Activated B cell treated with CpG ODN at 0.5 μM for 24 hours (primary cell): ENCODE measurements at regions of chr19 and their contacts with region 1.

Region 1: GRCh38 chr19:14136509-14137281 is at the start of gene ASF1B:
- DNase-seq: peak; percentile 94
- ATAC-seq: peak; percentile 80
- H3K4me3 Mint-ChIP-seq: peak within 1 kb of the TSS; percentile 94
- H3K27ac Mint-ChIP-seq: peak within 1 kb of the TSS; percentile 94
- H3K4me1 Mint-ChIP-seq: peaks cover 16% of the 10 kb centered on the region
- H3K27me3 Mint-ChIP-seq: no peaks in the 10 kb centered on the region
- CTCF ChIP-seq: no peak
- total RNA-seq, gene ASF1B: 3.4 and 3.7 TPM in 2 replicates

Region 2: GRCh38 chr19:13794757-13795589 is 341.7 kb before region 1 on chr19 and contains the start of gene ZSWIM4:
- CTCF ChIA-PET with region 1: no interaction called
- POLR2A ChIA-PET with region 1: no interaction called
- intact Hi-C with region 1: loop called (anchors 5 kb)
- DNase-seq: peak; percentile 86
- ATAC-seq: peak; percentile 95
- H3K4me3 Mint-ChIP-seq: peak within 1 kb of the TSS; percentile 98
- H3K27ac Mint-ChIP-seq: peak within 1 kb of the TSS; percentile 91
- H3K4me1 Mint-ChIP-seq: peaks cover 32% of the 10 kb centered on the region
- H3K27me3 Mint-ChIP-seq: no peaks in the 10 kb centered on the region
- CTCF ChIP-seq: no peak
- total RNA-seq, gene ZSWIM4: 8.5 and 11.2 TPM in 2 replicates

Region 3: DNA sequence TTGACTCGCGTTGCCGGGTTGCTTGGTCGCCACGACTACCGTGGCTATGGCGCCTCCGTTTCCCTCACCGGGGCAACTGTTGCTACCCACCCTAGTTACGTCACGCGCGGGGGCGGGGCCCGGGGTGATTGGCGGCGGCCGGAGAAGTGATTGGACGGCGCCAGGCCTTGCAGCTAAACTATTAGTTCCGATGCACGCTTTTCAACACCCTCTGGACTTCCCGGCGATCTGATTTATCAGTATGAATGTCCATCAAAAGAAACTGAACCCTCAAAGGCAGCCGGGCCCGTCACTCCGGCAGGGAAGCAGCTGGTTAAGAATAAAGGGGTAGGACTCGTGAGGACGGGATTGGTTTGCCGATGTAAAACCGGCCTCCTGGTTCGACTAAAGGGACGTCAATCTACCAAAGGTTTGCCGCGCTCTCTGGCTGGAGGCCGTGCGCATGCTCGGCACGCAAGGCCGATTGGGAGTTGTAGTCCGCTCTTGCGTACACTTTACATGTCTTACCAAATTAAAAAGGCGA is 130.4 kb before region 1 on chr19 and contains the start of gene RFX1:
- CTCF ChIA-PET with region 1: no interaction called
- POLR2A ChIA-PET with region 1: interaction called, 5 read pairs
- intact Hi-C with region 1: loop called (anchors 2 kb)
- DNase-seq: peak; percentile 100
- ATAC-seq: peak; percentile 74
- H3K4me3 Mint-ChIP-seq: peak within 1 kb of the TSS; percentile 94
- H3K27ac Mint-ChIP-seq: peak within 1 kb of the TSS; percentile 98
- H3K4me1 Mint-ChIP-seq: peaks cover 48% of the 10 kb centered on the region
- H3K27me3 Mint-ChIP-seq: no peaks in the 10 kb centered on the region
- CTCF ChIP-seq: no peak
- total RNA-seq, gene RFX1: 19.0 and 19.9 TPM in 2 replicates

Region 4: GRCh38 chr19:14091081-14091812 is 45.4 kb before region 1 on chr19:
- CTCF ChIA-PET with region 1: no interaction called
- POLR2A ChIA-PET with region 1: interaction called, 11 read pairs
- intact Hi-C with region 1: loop called (anchors 1 kb)
- DNase-seq: peak; percentile 81
- ATAC-seq: peak; percentile 75
- H3K4me3 Mint-ChIP-seq: peak overlapping the region; percentile 99
- H3K27ac Mint-ChIP-seq: peak overlapping the region; percentile 99
- H3K4me1 Mint-ChIP-seq: peaks cover 18% of the 10 kb centered on the region
- H3K27me3 Mint-ChIP-seq: no peaks in the 10 kb centered on the region
- CTCF ChIP-seq: no peak

Region 5: GRCh38 chr19:14198384-14199376 is 62.0 kb after region 1 on chr19:
- CTCF ChIA-PET with region 1: interaction called, 3 read pairs
- POLR2A ChIA-PET with region 1: no interaction called
- intact Hi-C with region 1: loop called (anchors 2 kb)
- DNase-seq: no peak
- ATAC-seq: no peak
- H3K4me3 Mint-ChIP-seq: no peak overlapping the region
- H3K27ac Mint-ChIP-seq: no peak overlapping the region
- H3K4me1 Mint-ChIP-seq: peaks cover 10% of the 10 kb centered on the region
- H3K27me3 Mint-ChIP-seq: peaks cover 5% of the 10 kb centered on the region
- CTCF ChIP-seq: no peak

Region 6: GRCh38 chr19:14248578-14249011 is 111.9 kb after region 1 on chr19:
- CTCF ChIA-PET with region 1: no interaction called
- POLR2A ChIA-PET with region 1: no interaction called
- intact Hi-C with region 1: no loop called
- DNase-seq: peak; percentile 32
- ATAC-seq: peak; percentile 67
- H3K4me3 Mint-ChIP-seq: peak overlapping the region; percentile 69
- H3K27ac Mint-ChIP-seq: peak overlapping the region; percentile 35
- H3K4me1 Mint-ChIP-seq: peaks cover 23% of the 10 kb centered on the region
- H3K27me3 Mint-ChIP-seq: peaks cover 3% of the 10 kb centered on the region
- CTCF ChIP-seq: no peak

Region 7: DNA sequence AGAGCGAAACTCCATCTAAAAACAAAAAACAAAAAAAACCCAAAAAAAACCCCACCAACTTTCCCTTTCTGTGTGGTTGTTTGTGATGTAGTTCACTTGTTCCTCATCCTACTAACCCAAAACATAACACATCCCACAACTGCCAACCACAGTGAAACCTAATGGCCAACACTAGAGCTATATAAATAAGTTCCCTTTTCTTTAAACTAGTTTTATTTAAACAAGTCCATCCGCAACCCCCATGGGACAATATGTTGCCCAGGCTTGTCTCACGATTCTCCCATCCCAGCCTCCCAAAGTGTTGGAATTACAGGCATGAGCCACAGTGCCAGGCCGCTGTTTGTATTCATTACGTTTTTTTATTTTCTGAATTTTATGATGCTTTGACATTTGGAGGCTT is 173.4 kb after region 1 on chr19:
- CTCF ChIA-PET with region 1: no interaction called
- POLR2A ChIA-PET with region 1: no interaction called
- intact Hi-C with region 1: no loop called
- DNase-seq: no peak
- ATAC-seq: peak; percentile 76
- H3K4me3 Mint-ChIP-seq: no peak overlapping the region
- H3K27ac Mint-ChIP-seq: peak overlapping the region; percentile 4
- H3K4me1 Mint-ChIP-seq: peaks cover 17% of the 10 kb centered on the region
- H3K27me3 Mint-ChIP-seq: no peaks in the 10 kb centered on the region
- CTCF ChIP-seq: no peak

Region 8: GRCh38 chr19:14419106-14419813 is 282.6 kb after region 1 on chr19 and contains the start of gene DDX39A:
- CTCF ChIA-PET with region 1: no interaction called
- POLR2A ChIA-PET with region 1: no interaction called
- intact Hi-C with region 1: loop called (anchors 1 kb)
- DNase-seq: peak; percentile 83
- ATAC-seq: peak; percentile 91
- H3K4me3 Mint-ChIP-seq: peak within 1 kb of the TSS; percentile 99
- H3K27ac Mint-ChIP-seq: peak within 1 kb of the TSS; percentile 99
- H3K4me1 Mint-ChIP-seq: peaks cover 44% of the 10 kb centered on the region
- H3K27me3 Mint-ChIP-seq: no peaks in the 10 kb centered on the region
- CTCF ChIP-seq: no peak
- total RNA-seq, gene DDX39A: 210 and 211 TPM in 2 replicates

Region 9: DNA sequence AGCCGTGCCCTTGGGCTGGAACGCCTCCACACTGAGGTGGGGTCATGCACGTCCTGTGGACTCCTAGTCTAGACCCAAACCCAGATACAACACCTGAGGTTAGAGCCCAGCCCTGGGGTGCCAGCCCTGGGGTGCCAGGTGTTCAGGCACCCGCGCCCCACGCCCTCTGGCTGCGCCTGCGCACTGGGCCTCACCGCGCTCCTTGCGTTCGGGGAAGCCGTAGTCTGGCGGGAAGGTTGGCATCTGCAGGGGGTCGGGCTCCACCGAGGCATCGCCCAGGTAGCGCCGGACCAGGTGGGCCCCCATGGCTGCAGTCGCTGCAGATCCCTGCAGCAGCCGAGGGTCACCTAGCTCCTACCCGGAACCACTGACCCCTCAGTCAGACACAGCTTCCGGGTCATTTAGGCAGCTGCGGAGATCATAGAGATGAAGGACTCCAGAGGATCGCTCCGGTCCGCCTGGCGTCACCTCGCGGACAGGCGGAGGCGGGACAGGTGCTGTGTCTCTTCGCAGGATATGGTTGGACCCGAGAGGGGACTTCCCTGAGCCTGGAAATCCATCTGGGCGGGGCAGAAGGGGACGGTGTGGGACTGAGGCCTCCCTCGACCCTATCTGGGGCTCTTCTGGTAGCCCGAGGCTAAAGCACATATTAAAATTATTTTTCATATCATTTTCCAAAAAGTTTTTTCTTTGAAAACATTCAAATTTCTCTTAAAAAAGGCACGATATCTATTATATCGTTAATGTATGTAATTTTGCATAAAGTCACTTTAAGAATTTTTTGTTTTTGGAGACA is 435.2 kb after region 1 on chr19 and contains the start of gene NDUFB7:
- CTCF ChIA-PET with region 1: no interaction called
- POLR2A ChIA-PET with region 1: interaction called, 3 read pairs
- intact Hi-C with region 1: loop called (anchors 5 kb)
- DNase-seq: peak; percentile 81
- ATAC-seq: peak; percentile 84
- H3K4me3 Mint-ChIP-seq: peak within 1 kb of the TSS; percentile 96
- H3K27ac Mint-ChIP-seq: peak within 1 kb of the TSS; percentile 92
- H3K4me1 Mint-ChIP-seq: peaks cover 57% of the 10 kb centered on the region
- H3K27me3 Mint-ChIP-seq: no peaks in the 10 kb centered on the region
- CTCF ChIP-seq: peak; percentile 65
- total RNA-seq, gene NDUFB7: 108 and 129 TPM in 2 replicates